ENCODE measurements at regions of chr2 and their contacts with region 1.

Region 1: DNA sequence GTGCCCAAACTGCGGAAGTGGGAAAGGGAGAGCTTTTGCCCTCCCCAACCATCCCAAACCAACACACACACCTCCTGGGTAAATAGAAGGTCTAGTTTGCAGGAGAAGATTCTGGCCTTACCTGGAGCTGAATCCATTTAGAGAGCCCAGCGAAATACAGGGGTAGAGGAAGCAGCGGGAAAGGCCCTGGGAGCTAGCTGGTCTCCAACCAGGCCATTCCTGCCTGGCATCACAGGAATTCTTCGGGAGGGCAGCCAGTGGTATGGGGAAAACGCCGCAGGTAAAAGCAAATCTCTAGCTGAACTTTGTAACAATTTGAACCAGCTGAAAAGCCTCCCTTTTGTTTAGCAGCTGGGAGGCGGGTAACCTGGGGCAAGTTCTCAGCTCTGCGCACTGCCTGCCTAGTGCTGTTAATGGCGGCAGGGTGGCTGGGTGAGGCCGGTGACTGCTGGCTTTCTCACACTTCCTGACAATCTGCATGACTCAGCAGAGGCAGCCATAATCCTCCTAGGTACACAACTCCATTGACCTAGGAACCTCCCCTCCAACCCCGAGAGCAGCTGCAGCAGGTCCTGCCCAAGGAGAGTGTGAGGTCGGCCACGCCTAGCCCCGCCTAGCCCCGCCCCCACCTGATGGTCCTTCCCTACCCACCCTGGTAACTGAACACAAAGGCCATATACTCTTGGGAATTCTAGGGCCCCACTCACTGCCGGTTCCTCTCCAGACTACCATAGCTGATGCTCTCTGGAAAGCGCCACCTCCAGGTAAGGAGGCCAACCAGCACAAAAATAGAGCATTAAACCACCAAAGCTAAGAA is 483.8 kb upstream of the REG3G start:
- DNase-seq: peak; percentile 98
- ATAC-seq: peak; percentile 97
- H3K4me3 ChIP-seq: peak overlapping the region; percentile 83 to 93 (median 83)
- H3K27ac ChIP-seq: peak overlapping the region; percentile 98
- H3K4me1 ChIP-seq: peaks cover 50% of the 10 kb centered on the region
- H3K27me3 ChIP-seq: peaks cover 0 to 4% of the 10 kb centered on the region in 2 experiments; a peak in 1 of 5 replicates
- CTCF ChIP-seq: peak; percentile 86
- EP300 ChIP-seq: peak; percentile 65 to 67; a peak in 3 of 4 replicates
- POLR2A ChIP-seq: peak; percentile 89 to 98
- RAD21 ChIP-seq: peak; percentile 45

Region 2: DNA sequence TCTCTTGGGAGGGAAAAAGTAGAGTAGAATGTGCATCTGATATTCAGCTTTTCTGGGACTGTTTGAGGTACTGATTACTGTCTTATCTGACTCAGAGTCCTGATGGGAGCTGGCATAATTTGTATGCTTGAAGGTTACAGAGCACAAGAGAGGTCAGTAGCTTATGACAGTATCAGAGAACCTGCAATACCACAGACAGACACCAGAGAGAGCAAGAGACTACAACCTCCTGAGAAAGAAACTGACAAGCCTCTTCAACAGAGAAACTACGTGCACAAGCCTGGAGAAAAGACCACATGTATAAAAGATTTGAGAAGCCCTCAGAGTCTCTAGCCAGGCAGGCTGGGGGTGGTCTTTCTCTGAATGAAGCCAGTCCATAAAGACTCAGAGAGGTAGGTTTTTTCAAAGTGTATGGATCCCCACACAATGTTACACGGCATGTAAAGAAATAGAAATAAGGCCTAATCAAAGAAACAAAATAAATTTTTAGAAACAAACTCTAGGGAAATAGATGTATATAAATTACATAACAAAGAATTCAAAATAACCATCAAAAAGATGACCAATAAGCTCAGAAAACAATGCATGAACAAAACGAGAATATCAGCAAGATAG is 1587.8 kb before region 1 on chr2:
- CTCF ChIA-PET with region 1: no interaction called
- POLR2A ChIA-PET with region 1: no interaction called
- in situ Hi-C with region 1: no loop called
- intact Hi-C with region 1: loop called (anchors 5 kb)
- DNase-seq: peak; percentile 68
- ATAC-seq: peak; percentile 98
- H3K4me3 ChIP-seq: no peak overlapping the region
- H3K27ac ChIP-seq: no peak overlapping the region
- H3K4me1 ChIP-seq: no peaks in the 10 kb centered on the region
- H3K27me3 ChIP-seq: no peaks in the 10 kb centered on the region
- CTCF ChIP-seq: peak; percentile 88
- EP300 ChIP-seq: no peak
- POLR2A ChIP-seq: no peak
- RAD21 ChIP-seq: peak; percentile 81

Region 3: GRCh38 chr2:77977471-77978063 is 564.1 kb before region 1 on chr2:
- CTCF ChIA-PET with region 1: no interaction called
- POLR2A ChIA-PET with region 1: no interaction called
- in situ Hi-C with region 1: loop called (anchors 10 kb)
- intact Hi-C with region 1: no loop called
- DNase-seq: no peak
- ATAC-seq: peak; percentile 58
- H3K4me3 ChIP-seq: no peak overlapping the region
- H3K27ac ChIP-seq: no peak overlapping the region
- H3K4me1 ChIP-seq: no peaks in the 10 kb centered on the region
- H3K27me3 ChIP-seq: no peaks in the 10 kb centered on the region
- CTCF ChIP-seq: peak; percentile 23
- EP300 ChIP-seq: no peak
- POLR2A ChIP-seq: no peak
- RAD21 ChIP-seq: no peak

Region 4: DNA sequence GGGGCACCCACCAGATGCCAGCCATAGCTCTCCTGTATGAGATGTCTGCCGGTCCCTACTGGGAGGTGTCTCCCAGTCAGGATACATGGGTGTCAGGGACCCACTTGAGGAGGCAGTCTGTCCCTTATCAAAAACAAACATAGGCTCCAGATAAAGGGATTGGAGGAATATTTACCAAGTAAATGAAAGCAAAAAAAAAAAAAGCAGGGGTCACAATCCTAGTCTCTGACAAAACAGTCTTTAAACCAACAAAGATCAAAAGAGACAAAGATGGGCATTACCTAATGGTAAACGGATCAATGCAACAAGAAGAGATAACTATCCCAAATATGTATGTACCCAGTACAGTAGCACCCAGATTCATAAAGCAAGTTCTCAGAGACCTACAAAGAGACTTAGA is 379.5 kb before region 1 on chr2:
- CTCF ChIA-PET with region 1: no interaction called
- POLR2A ChIA-PET with region 1: no interaction called
- in situ Hi-C with region 1: no loop called
- intact Hi-C with region 1: loop called (anchors 2 kb)
- DNase-seq: peak; percentile 94
- ATAC-seq: peak; percentile 98
- H3K4me3 ChIP-seq: no peak overlapping the region
- H3K27ac ChIP-seq: no peak overlapping the region
- H3K4me1 ChIP-seq: peaks cover 18% of the 10 kb centered on the region
- H3K27me3 ChIP-seq: no peaks in the 10 kb centered on the region
- CTCF ChIP-seq: no peak
- EP300 ChIP-seq: peak; percentile 64 to 91; a peak in 3 of 4 replicates
- POLR2A ChIP-seq: no peak
- RAD21 ChIP-seq: no peak

Region 5: GRCh38 chr2:78260861-78261260 is 280.8 kb before region 1 on chr2:
- CTCF ChIA-PET with region 1: no interaction called
- POLR2A ChIA-PET with region 1: interaction called, 13 read pairs
- in situ Hi-C with region 1: no loop called
- intact Hi-C with region 1: no loop called
- DNase-seq: peak; percentile 93
- ATAC-seq: peak; percentile 100
- H3K4me3 ChIP-seq: peak overlapping the region; percentile 9 to 48 (median 44); a peak in 3 of 6 replicates
- H3K27ac ChIP-seq: peak overlapping the region; percentile 69
- H3K4me1 ChIP-seq: peaks cover 36% of the 10 kb centered on the region
- H3K27me3 ChIP-seq: no peaks in the 10 kb centered on the region
- CTCF ChIP-seq: no peak
- EP300 ChIP-seq: peak; percentile 32 to 96; a peak in 3 of 4 replicates
- POLR2A ChIP-seq: no peak
- RAD21 ChIP-seq: no peak

Region 6: DNA sequence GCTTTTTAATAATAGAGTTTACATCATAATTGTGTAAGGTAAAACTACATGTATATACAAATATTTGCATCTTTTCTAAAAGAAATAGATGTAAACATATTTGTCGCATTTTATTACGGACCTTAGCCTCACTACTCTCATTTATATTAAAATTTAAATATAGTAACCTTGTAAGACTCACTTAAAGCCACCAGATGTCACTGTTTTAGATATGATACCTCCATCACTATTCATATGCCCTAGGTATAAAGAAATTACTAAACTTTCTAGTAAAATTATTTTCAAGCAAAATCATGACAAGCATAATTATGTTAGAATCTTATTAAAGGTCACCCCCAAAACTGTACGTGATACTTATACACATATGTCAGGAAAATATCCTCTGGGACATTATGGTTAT is 190.5 kb before region 1 on chr2:
- CTCF ChIA-PET with region 1: no interaction called
- POLR2A ChIA-PET with region 1: interaction called, 3 read pairs
- in situ Hi-C with region 1: no loop called
- intact Hi-C with region 1: loop called (anchors 5 kb)
- DNase-seq: no peak
- ATAC-seq: no peak
- H3K4me3 ChIP-seq: no peak overlapping the region
- H3K27ac ChIP-seq: no peak overlapping the region
- H3K4me1 ChIP-seq: no peaks in the 10 kb centered on the region
- H3K27me3 ChIP-seq: no peaks in the 10 kb centered on the region
- CTCF ChIP-seq: no peak
- EP300 ChIP-seq: no peak
- POLR2A ChIP-seq: no peak
- RAD21 ChIP-seq: no peak

Region 7: DNA sequence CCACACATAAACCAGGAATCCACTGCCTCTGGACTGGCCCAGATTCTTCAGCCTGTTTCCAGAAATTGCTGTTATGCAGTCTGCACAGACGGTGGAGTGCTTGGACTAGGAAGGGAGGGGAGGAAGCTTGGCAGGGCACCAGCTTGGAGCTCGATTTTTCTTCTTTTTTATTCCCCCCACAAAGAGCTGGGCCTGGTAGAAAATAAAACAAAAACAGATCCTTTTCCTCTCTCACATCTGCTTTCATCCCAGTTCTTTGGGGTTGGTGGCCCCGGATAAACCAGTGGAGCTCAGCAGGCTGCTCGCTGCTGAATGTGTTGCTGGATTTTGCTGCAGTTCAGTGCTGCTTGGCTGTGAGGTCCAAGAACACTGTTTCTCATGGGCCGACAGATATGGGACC is 1746.9 kb after region 1 on chr2:
- CTCF ChIA-PET with region 1: no interaction called
- POLR2A ChIA-PET with region 1: no interaction called
- in situ Hi-C with region 1: no loop called
- intact Hi-C with region 1: no loop called
- DNase-seq: no peak
- ATAC-seq: peak; percentile 54; the same call in 1 of the 3 replicates
- H3K4me3 ChIP-seq: no peak overlapping the region
- H3K27ac ChIP-seq: no peak overlapping the region
- H3K4me1 ChIP-seq: no peaks in the 10 kb centered on the region
- H3K27me3 ChIP-seq: no peaks in the 10 kb centered on the region
- CTCF ChIP-seq: no peak
- EP300 ChIP-seq: no peak
- POLR2A ChIP-seq: no peak
- RAD21 ChIP-seq: no peak